ENCODE measurements at regions of chr1 and their contacts with region 1.

Region 1: DNA sequence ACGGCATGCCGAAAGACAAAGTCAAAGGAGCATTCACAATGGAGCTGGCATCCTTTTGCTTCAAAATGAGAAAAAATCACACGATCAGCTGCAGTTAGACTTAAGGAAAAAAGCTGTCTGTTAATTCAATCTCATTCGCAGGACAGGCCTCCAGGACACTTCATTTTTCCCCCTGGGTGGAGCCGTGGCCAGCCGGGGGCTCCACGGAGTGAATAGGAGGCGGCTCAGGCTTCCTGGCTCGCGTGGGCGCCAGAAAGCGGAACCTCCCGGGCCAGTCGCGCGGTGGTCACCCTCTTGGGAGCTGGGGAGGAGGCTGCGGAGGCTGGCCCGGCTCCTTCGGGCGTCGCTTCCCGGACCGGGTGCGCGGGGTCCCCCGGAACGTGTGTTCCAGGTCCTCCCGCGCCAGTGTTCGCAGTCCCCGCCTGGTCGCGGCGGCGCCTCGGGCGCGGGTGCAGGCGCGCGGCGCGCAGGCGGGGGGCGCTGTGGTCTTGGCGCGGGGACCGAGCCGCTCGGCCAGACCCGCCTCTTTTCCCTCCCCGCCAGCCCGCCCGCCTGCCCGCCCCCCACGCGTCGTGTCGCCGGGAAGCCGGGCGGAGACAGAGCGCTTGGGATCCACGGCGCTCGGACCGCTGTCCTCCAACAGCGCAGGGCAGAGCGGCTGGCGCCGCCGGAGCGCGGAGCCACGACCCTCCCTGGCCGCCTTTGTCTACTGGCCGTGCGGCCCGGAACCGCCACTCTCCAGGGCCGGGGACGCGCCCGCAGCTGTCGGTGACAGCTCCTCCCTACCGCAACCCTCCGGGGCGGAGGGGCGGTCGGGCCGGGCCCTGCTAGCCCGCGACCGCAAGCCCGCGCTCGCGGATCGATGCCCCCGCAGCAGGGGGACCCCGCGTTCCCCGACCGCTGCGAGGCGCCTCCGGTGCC is at the start of gene RHOU:
- DNase-seq: peak; percentile 85
- total RNA-seq, gene RHOU: 3.8 TPM

Region 2: GRCh38 chr1:228842094-228842775 is 107.1 kb after region 1 on chr1:
- intact Hi-C with region 1: loop called (anchors 5 kb)
- DNase-seq: no peak

Region 3: DNA sequence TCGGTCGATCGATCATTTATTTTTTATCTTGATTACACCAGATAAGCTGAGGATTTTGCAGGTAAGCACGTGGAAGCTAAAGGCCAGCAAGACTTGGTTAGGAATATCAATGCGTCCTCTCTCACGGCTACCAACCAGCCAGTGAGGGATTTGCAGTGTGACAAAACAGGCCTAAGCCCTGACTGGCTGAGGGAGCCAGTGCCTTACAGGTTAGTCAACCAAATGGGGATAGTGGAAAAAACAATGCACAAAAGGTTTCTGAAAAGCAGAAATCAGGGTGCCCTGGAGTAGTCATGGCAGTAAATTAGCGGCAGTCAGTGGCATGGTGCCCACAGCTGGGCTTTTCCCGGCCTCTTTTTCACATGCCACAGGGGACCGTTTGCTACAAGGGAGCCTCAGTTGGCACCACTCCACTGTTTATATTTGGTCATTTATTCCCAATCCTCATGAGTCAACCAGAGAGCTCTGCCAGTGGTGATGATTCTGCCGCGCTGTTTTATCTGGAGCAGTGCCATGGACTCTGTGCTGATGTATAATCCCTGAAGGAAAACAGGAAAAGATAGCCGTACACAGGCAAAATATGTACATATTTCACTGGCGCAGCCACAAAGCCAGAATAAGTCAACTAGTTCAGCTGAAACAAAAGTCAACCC is 167.8 kb after region 1 on chr1:
- intact Hi-C with region 1: loop called (anchors 5 kb)
- DNase-seq: no peak

Region 4: DNA sequence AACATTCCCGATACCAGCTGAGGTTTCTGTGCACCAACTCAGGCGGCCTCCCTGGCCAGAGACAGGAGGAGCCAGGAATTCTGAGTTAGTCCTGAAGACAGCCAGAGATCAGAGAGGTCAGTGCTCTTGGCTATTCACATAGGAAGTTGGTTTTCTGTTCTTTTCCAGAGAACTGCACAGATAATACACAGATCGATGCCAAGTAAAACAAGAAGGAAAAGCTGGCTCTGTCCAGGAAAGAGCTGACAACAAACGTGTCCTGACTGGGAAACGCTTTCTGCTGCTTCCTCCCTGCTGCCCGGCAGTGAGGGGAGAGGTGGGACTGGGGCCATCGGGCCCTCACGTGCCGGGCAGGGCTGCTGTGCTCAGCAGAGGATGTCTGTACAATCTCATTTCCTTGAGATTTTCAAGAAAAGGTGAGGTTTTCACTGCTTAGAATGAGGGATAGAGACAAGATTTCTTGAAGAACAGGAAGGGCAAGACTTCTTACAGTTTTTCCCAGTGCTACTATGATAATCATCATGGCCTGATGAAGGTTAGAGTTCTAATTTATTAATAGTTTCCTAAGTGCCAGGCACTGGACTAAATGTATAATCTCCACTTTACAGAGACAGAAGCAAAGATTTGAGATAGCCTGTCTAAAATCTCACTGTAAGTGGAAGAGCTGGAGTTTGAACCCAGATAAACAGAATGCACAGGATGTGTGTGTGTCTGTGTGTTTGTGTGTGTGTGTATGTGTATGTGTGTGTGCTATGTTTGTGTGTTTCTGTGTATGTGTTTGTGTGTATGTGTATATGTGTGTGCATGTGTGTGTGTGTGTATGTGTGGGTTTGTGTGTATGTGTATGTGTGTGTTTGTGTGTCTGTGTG is 324.8 kb after region 1 on chr1:
- intact Hi-C with region 1: loop called (anchors 10 kb)
- DNase-seq: peak; percentile 82

Region 5: GRCh38 chr1:229156872-229157271 is 421.7 kb after region 1 on chr1:
- intact Hi-C with region 1: loop called (anchors 5 kb)
- DNase-seq: no peak

Region 6: DNA sequence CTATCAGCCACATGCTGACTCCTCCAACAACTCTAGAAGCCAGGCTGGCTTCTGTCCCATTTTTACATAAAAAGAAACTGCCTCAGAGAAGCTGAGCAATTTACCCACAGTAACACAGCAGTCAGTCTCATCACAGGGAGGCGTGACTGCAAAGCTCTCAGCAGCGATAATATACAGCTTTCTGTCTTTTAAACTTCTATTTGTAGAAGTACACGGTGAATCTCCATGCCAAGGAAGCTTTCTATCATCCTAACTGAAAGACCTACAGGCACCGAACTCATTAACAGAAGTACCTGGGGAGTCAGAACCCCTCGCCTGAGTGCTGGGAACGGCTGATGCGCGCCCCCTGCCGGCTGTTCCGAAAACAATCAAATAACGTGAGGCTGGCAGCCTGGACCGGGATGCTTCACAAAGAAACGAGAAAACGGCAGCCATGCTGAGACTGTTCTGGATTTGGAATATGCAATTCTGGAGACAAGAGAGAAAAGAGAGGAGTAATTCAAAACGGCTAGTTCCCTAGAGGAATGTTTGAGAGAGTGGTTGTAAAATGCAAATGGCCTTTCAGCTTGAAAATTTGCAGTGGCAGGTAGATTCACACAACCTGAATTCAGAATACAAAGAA is 492.3 kb after region 1 on chr1:
- intact Hi-C with region 1: loop called (anchors 2 kb)
- DNase-seq: peak; percentile 92